Transverse colon (tissue), 4 donors: ENCODE measurements at regions of chr17 and their contacts with region 1.

Region 1: DNA sequence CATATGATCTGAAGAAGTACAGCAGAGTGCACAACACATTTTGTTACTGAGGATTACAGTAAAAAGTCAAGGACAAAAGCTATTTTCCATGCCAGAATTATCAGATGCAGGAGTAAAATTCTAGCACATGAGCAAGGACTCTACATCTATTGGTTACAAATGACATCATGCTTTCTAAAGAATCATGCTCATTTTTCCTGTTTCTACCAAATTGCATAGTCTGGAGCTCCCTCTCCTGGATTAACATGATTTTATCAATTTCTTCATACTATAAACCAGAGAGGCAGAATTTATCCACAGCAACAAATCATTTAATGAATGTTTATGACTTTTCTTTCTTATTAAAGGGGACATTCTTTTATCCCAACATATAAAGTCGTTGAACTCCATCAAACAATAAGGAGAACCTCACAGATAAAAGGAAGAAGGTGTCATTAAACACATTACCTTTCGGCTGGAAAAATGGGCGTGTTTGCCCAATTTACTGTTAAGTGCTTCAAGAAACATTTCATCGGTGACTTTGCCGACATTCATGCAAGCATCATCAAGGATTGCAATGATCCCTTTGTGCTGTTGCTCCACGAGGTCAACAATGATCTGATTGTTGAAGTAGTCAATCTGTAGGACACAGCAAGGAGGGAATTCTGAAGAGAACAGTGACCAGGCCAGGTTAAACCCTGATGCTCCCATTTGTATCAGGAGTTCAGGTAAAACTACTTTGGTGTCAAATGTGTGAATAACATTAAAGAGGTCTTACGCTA is 121.7 kb downstream of the MYO1D start:
- DNase-seq: no peak
- H3K4me3 ChIP-seq: no peak overlapping the region
- H3K27ac ChIP-seq: no peak overlapping the region
- H3K4me1 ChIP-seq: peaks cover 0 to 19% (median 0%) of the 10 kb centered on the region in 4 donors
- H3K27me3 ChIP-seq: no peaks in the 10 kb centered on the region
- CTCF ChIP-seq: peak in 4 of 5 experiments; percentile 32 to 47 (median 37)
- EP300 ChIP-seq: no peak
- POLR2A ChIP-seq: no peak

Region 2: GRCh38 chr17:32461853-32462617 is 293.2 kb before region 1 on chr17:
- in situ Hi-C with region 1: loop called in 2 of 4 experiments (anchors 25 kb)
- intact Hi-C with region 1: no loop called
- DNase-seq: peak; percentile 63
- H3K4me3 ChIP-seq: no peak overlapping the region
- H3K27ac ChIP-seq: no peak overlapping the region
- H3K4me1 ChIP-seq: peaks cover 0 to 5% (median 1%) of the 10 kb centered on the region in 4 donors
- H3K27me3 ChIP-seq: no peaks in the 10 kb centered on the region
- CTCF ChIP-seq: peak; percentile 35 to 50 (median 36)
- EP300 ChIP-seq: no peak
- POLR2A ChIP-seq: no peak

Region 3: DNA sequence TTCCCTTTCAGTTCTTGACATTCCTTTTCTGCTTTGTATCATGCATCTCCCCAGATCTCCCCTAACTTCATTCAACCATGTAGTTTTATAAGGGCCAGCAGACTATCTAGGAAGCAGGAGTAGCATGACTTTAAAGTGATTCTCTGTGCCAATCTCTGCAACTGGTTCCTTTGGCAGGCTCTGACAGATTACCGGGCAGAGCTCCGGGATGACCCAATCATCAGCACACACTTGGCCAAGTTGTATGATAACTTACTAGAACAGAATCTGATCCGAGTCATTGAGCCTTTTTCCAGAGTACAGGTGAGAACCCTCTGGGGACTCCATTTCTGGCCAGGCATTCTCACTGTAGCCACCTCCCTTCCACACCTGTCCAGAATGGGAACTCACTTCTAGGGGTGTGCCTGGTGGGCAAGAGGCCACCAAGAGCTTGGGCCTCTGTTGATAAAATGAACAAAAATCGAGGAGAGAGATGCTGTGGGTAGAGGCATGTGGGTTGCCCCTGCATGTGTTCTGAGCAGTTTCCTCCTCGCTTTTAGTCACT is 276.1 kb before region 1 on chr17:
- in situ Hi-C with region 1: loop called (anchors 10 to 25 kb)
- intact Hi-C with region 1: loop called (anchors 10 kb)
- DNase-seq: no peak
- H3K4me3 ChIP-seq: no peak overlapping the region
- H3K27ac ChIP-seq: no peak overlapping the region
- H3K4me1 ChIP-seq: peaks cover 0 to 7% (median 0%) of the 10 kb centered on the region in 4 donors
- H3K27me3 ChIP-seq: no peaks in the 10 kb centered on the region
- CTCF ChIP-seq: no peak
- EP300 ChIP-seq: no peak
- POLR2A ChIP-seq: no peak

Region 4: GRCh38 chr17:32486111-32486700 is 269.0 kb before region 1 on chr17:
- in situ Hi-C with region 1: loop called in 1 of 4 experiments (anchors 25 kb)
- intact Hi-C with region 1: loop called (anchors 10 kb)
- DNase-seq: peak; percentile 73
- H3K4me3 ChIP-seq: peak overlapping the region in 3 of 4 donors; percentile 58 to 59 (median 58)
- H3K27ac ChIP-seq: peak overlapping the region; percentile 50 to 67 (median 64)
- H3K4me1 ChIP-seq: peaks cover 0 to 24% (median 11%) of the 10 kb centered on the region in 4 donors
- H3K27me3 ChIP-seq: no peaks in the 10 kb centered on the region
- CTCF ChIP-seq: no peak
- EP300 ChIP-seq: no peak
- POLR2A ChIP-seq: no peak

Region 5: GRCh38 chr17:32659419-32659842 is 95.8 kb before region 1 on chr17:
- in situ Hi-C with region 1: loop called in 2 of 4 experiments (anchors 10 to 25 kb)
- intact Hi-C with region 1: no loop called
- DNase-seq: peak; percentile 73
- H3K4me3 ChIP-seq: no peak overlapping the region
- H3K27ac ChIP-seq: no peak overlapping the region
- H3K4me1 ChIP-seq: no peaks in the 10 kb centered on the region
- H3K27me3 ChIP-seq: no peaks in the 10 kb centered on the region
- CTCF ChIP-seq: peak; percentile 83 to 92 (median 90)
- EP300 ChIP-seq: no peak
- POLR2A ChIP-seq: no peak

Region 6: DNA sequence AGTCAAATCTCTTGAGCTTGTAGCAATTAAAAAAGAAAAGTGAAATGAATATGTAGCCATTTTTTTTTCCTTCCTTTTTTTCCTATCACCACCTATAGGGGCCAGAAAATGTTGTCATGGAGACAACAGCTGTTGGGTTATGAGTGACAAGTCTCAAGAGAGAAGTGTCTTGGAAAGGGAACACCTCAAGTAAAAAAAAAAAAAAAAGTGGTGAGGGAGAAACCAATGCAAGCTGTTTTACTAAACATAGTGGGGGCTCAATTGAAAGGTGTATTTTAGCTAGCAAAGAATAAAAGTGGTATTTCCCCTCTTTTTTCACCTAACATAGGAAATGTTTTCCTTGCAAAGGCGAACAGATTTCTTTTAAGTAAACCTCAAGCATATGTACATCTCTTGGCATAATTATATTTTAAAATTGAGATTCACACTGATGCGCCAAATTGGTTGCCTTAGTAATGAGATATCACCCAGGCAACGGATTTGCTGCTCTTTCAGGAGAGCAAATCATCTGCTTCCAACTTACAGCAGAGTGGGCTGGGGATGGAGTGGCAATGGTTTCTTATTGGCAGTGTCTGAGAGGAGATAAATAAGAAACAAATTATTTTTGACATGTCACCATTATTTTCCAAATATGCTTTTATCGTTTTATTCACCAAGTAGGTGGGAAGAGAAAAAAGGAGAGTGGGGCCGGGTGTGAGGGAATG is 61.9 kb before region 1 on chr17:
- in situ Hi-C with region 1: no loop called
- intact Hi-C with region 1: no loop called
- DNase-seq: no peak
- H3K4me3 ChIP-seq: no peak overlapping the region
- H3K27ac ChIP-seq: no peak overlapping the region
- H3K4me1 ChIP-seq: no peaks in the 10 kb centered on the region
- H3K27me3 ChIP-seq: no peaks in the 10 kb centered on the region
- CTCF ChIP-seq: no peak
- EP300 ChIP-seq: no peak
- POLR2A ChIP-seq: no peak